Common myeloid progenitor, CD34-positive (primary cell): ENCODE measurements at regions of chr20 and their contacts with region 1.

Region 1: GRCh38 chr20:41339507-41340326 is 904 bp upstream of the LPIN3 start:
- DNase-seq: peak; percentile 45 to 69 (median 67)
- H3K4me3 ChIP-seq: peak overlapping the region in 2 of 7 experiments; percentile 48 to 53
- H3K27ac ChIP-seq: no peak overlapping the region
- H3K4me1 ChIP-seq: peaks cover 0 to 12% (median 10%) of the 10 kb centered on the region in 4 experiments
- H3K27me3 ChIP-seq: peaks cover 0 to 45% (median 15%) of the 10 kb centered on the region in 5 experiments

Region 2: DNA sequence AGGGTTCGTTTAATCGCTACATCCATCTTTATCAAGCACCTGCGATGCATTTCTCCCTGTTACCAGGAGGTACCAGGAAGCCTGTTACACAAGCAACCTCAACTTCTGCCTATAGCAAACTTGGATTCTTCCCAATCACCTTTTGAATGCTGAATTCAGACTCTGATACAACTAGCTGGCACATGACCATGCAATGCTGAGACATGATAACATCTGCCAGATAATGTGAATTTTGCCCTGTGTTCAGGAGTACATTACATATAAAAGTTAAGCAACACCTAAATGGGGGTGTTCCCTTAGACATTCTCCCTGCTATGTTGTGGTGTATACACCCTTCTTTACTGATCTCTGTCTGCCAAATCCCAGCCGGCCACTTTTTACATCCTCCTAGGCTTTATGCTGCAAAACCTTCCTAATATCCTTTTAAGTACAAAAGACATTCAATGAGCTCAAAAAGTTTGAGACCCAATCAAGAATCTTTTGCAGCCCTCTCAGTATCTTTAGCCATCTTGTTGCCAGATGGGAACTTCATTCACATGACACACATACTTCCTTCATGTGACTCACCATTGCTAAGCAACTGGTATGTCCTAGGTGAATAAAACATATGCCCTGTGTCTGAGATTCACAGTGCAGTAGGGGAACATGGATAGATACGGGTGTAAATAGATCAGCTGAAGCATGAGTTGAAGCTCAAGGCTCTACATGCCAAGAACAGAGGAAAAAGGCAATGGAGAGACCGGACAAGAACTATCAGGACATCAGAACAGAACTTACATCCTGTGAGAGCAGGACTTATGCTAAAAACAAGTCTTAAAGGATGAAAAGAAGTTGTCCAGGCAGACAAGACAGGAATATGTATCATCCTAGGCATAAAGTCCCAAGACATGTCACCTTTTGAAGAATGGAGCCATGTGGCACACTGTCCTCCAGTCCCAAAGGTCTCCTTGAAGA is 106.5 kb before region 1 on chr20:
- CTCF ChIA-PET with region 1: interaction called, 15 read pairs
- POLR2A ChIA-PET with region 1: no interaction called
- DNase-seq: peak; percentile 23 to 82 (median 68)
- H3K4me3 ChIP-seq: no peak overlapping the region
- H3K27ac ChIP-seq: no peak overlapping the region
- H3K4me1 ChIP-seq: peaks cover 0 to 9% (median 2%) of the 10 kb centered on the region in 4 experiments
- H3K27me3 ChIP-seq: peaks cover 0 to 7% (median 0%) of the 10 kb centered on the region in 5 experiments

Region 3: DNA sequence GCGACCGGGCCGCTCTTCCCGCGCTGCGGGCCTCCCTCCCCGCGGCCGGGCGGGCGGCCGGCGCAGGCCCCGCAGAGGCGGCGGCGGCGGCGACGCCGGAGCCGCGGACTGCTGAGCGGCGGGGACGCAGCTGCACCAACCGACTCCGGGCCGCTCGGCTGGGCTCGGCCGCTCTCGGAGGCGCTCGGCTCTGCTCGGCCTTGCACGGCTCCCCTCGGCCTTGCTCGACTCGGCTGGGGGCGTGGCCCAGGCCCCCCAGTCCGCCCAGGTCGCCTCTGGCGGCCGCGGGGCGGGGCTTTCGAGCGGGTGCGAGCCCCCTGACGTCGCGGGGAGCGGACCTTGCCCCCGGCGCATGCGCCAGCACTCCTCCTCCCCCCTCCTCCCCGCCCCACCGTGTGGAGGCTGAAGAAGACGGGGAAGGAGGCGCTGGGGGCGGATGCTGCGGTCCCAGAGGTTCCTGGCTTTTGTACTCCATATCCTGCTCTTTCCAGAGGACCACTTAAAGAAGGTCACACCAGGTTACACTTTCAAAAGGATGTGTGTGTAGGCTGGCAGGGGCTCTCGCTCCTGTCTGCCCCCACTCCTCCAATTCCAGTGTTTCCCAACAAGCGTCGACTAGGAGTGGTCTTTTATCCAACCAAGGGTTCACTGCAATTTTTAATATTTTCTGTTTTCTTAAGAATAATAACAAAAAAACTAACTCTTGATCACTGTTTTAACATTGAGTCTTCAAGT is 22.0 kb before region 1 on chr20 and contains the start of gene ZHX3:
- CTCF ChIA-PET with region 1: interaction called, 15 read pairs
- POLR2A ChIA-PET with region 1: no interaction called
- DNase-seq: peak; percentile 94 to 97 (median 97)
- H3K4me3 ChIP-seq: peak within 1 kb of the TSS; percentile 55 to 87 (median 67)
- H3K27ac ChIP-seq: peak within 1 kb of the TSS in 1 of 2 experiments; percentile 51
- H3K4me1 ChIP-seq: peaks cover 4 to 22% (median 14%) of the 10 kb centered on the region in 4 experiments
- H3K27me3 ChIP-seq: no peaks in the 10 kb centered on the region